ENCODE measurements at regions of chr7 and their contacts with region 1.

Region 1: DNA sequence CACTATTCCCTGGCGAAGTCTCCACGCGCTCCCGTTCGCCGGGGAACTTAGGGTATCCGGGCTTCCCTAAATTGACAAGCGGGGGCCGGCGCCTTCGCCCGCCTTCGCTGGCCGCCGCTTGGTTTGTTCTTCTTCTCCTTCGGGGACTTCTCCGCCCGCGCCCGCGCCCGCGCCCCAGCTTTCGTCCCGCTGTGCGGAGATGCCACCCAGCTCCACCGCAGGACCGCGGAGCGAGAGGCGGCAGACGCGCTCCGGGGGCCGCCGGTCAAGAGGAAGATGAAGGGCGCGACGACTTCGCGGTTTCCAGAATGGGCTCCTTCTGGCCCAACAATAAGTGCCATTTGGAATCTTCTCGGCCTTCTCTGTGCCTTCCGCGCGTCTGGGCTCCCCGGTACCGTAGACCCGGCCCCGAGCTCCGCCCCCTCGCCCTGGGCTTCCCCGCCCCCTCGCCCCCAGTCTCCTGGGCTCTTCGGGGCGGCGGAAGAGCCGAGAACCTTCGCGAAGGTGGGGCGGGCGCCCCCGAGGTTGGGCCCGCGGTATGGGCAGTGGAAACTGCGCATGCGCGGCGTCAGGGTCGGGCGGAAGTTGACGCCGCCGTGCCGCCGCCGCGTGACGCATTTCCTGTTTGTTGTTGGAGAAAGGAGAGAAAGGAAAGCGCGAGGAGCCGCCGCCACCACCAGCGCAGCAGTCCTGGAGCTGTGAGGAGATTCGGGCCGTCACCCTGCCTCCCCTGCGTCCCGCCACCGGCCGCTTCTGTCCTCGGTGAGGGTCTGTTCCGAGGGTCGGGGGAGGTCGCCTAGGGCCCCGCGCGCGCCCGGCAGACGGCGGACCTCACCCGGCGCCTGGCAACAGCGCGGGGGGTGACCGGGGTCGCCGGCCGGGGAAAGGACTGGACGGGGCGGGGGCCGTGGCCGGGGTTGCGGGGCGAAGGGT is at the start of gene DNAJB6:
- DNase-seq: peak; percentile 97
- ATAC-seq: peak; percentile 82
- H3K4me3 Mint-ChIP-seq: peak within 1 kb of the TSS; percentile 95
- H3K27ac Mint-ChIP-seq: peak within 1 kb of the TSS; percentile 97
- H3K4me1 Mint-ChIP-seq: peaks cover 63% of the 10 kb centered on the region
- H3K27me3 Mint-ChIP-seq: no peaks in the 10 kb centered on the region
- CTCF ChIP-seq: no peak
- total RNA-seq, gene DNAJB6: 74.3 and 75.6 TPM in 2 replicates

Region 2: GRCh38 chr7:155644178-155644970 is 1692.3 kb before region 1 on chr7 and contains the start of gene RBM33:
- CTCF ChIA-PET with region 1: no interaction called
- POLR2A ChIA-PET with region 1: no interaction called
- intact Hi-C with region 1: loop called (anchors 5 kb)
- DNase-seq: peak; percentile 86
- ATAC-seq: peak; percentile 74
- H3K4me3 Mint-ChIP-seq: peak within 1 kb of the TSS; percentile 98
- H3K27ac Mint-ChIP-seq: peak within 1 kb of the TSS; percentile 98
- H3K4me1 Mint-ChIP-seq: peaks cover 47% of the 10 kb centered on the region
- H3K27me3 Mint-ChIP-seq: no peaks in the 10 kb centered on the region
- CTCF ChIP-seq: no peak
- total RNA-seq, gene RBM33: 107 and 117 TPM in 2 replicates

Region 3: GRCh38 chr7:156903232-156903909 is 433.3 kb before region 1 on chr7:
- CTCF ChIA-PET with region 1: no interaction called
- POLR2A ChIA-PET with region 1: no interaction called
- intact Hi-C with region 1: loop called (anchors 5 kb)
- DNase-seq: no peak
- ATAC-seq: no peak
- H3K4me3 Mint-ChIP-seq: no peak overlapping the region
- H3K27ac Mint-ChIP-seq: no peak overlapping the region
- H3K4me1 Mint-ChIP-seq: no peaks in the 10 kb centered on the region
- H3K27me3 Mint-ChIP-seq: peaks cover 3% of the 10 kb centered on the region
- CTCF ChIP-seq: no peak

Region 4: DNA sequence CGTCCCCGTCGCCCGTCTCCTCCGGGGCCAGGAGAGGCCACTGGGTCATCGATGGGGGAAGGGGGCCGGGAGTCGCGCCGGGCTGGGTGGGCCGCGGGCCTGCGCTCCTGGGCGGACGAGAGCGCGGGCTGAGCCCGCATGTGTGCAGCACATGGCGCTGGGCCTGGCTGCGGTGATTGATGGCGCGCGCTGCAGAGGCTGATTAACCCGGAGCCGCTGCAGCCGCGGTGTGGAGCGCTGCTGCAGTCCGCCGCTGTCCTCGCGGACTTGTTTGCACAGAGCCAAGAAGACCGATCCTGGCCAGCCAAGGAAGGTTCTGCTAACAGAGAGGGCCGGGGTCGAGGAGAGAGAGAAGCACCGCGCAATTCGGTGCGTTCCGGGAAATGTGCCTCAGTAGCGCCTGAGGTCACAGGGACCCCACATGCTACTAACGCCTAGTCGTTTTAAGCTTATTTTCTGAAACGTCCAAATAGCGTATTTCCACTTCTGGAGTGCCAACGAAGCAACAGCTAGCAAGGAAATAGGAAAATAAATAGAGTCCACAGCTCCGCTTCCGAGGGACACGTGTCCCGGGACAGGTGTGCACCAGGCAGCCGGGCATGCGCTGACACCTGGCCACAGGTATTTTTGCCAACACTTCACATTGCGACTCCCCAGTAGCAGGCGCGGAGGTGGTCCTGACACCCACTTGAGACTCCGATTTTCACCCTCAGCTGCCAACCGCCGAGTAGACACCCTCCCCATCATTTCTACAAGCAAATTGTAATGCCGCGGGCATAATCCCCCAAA is 332.4 kb before region 1 on chr7:
- CTCF ChIA-PET with region 1: no interaction called
- POLR2A ChIA-PET with region 1: no interaction called
- intact Hi-C with region 1: loop called (anchors 5 kb)
- DNase-seq: no peak
- ATAC-seq: no peak
- H3K4me3 Mint-ChIP-seq: no peak overlapping the region
- H3K27ac Mint-ChIP-seq: no peak overlapping the region
- H3K4me1 Mint-ChIP-seq: peaks cover 26% of the 10 kb centered on the region
- H3K27me3 Mint-ChIP-seq: peaks cover 53% of the 10 kb centered on the region
- CTCF ChIP-seq: no peak

Region 5: GRCh38 chr7:157273208-157274093 is 63.2 kb before region 1 on chr7:
- CTCF ChIA-PET with region 1: interaction called, 9 read pairs
- POLR2A ChIA-PET with region 1: no interaction called
- intact Hi-C with region 1: loop called (anchors 1 kb)
- DNase-seq: peak; percentile 61
- ATAC-seq: peak; percentile 96
- H3K4me3 Mint-ChIP-seq: no peak overlapping the region
- H3K27ac Mint-ChIP-seq: no peak overlapping the region
- H3K4me1 Mint-ChIP-seq: peaks cover 5% of the 10 kb centered on the region
- H3K27me3 Mint-ChIP-seq: peaks cover 2% of the 10 kb centered on the region
- CTCF ChIP-seq: peak; percentile 42

Region 6: GRCh38 chr7:157386979-157387800 is 50.5 kb after region 1 on chr7:
- CTCF ChIA-PET with region 1: no interaction called
- POLR2A ChIA-PET with region 1: no interaction called
- intact Hi-C with region 1: loop called (anchors 2 kb)
- DNase-seq: peak; percentile 52
- ATAC-seq: peak; percentile 95
- H3K4me3 Mint-ChIP-seq: no peak overlapping the region
- H3K27ac Mint-ChIP-seq: peak overlapping the region; percentile 19
- H3K4me1 Mint-ChIP-seq: peaks cover 16% of the 10 kb centered on the region
- H3K27me3 Mint-ChIP-seq: no peaks in the 10 kb centered on the region
- CTCF ChIP-seq: peak; percentile 68

Measured in activated B cell treated with CpG ODN at 0.5 μM for 24 hours (primary cell).